HCT116 (cell line): ENCODE measurements at regions of chr4 and their contacts with region 1.

Region 1: GRCh38 chr4:173025131-173025530 is 143.5 kb upstream of the GALNT7 start:
- DNase-seq: peak; percentile 76
- ATAC-seq: peak; percentile 90
- H3K4me3 ChIP-seq: no peak overlapping the region
- H3K27ac ChIP-seq: no peak overlapping the region
- H3K4me1 ChIP-seq: no peaks in the 10 kb centered on the region
- H3K27me3 ChIP-seq: no peaks in the 10 kb centered on the region
- CTCF ChIP-seq: peak; percentile 70 to 89 (median 83)
- POLR2A ChIP-seq: no peak
- RAD21 ChIP-seq: peak; percentile 95

Region 2: GRCh38 chr4:172736046-172736445 is 289.1 kb before region 1 on chr4:
- CTCF ChIA-PET with region 1: no interaction called
- POLR2A ChIA-PET with region 1: no interaction called
- RAD21 ChIA-PET with region 1: no interaction called
- intact Hi-C with region 1: no loop called
- DNase-seq: no peak
- ATAC-seq: no peak
- H3K4me3 ChIP-seq: no peak overlapping the region
- H3K27ac ChIP-seq: no peak overlapping the region
- H3K4me1 ChIP-seq: no peaks in the 10 kb centered on the region
- H3K27me3 ChIP-seq: no peaks in the 10 kb centered on the region
- CTCF ChIP-seq: no peak
- POLR2A ChIP-seq: no peak
- RAD21 ChIP-seq: no peak

Region 3: GRCh38 chr4:173013232-173013930 is 11.8 kb before region 1 on chr4:
- CTCF ChIA-PET with region 1: interaction called, 33 read pairs
- POLR2A ChIA-PET with region 1: no interaction called
- RAD21 ChIA-PET with region 1: interaction called in 1 of 2 experiments, 3 read pairs
- intact Hi-C with region 1: no loop called
- DNase-seq: no peak
- ATAC-seq: peak; percentile 61
- H3K4me3 ChIP-seq: no peak overlapping the region
- H3K27ac ChIP-seq: no peak overlapping the region
- H3K4me1 ChIP-seq: peaks cover 0 to 9% of the 10 kb centered on the region in 2 experiments; a peak in 2 of 4 replicates
- H3K27me3 ChIP-seq: no peaks in the 10 kb centered on the region
- CTCF ChIP-seq: peak; percentile 50 to 71 (median 69)
- POLR2A ChIP-seq: no peak
- RAD21 ChIP-seq: peak; percentile 81

Region 4: GRCh38 chr4:173168396-173169177 is 143.5 kb after region 1 on chr4 and contains the start of gene GALNT7:
- CTCF ChIA-PET with region 1: interaction called, 3 read pairs
- POLR2A ChIA-PET with region 1: no interaction called
- RAD21 ChIA-PET with region 1: interaction called in 1 of 2 experiments, 3 read pairs
- intact Hi-C with region 1: loop called (anchors 1 kb)
- DNase-seq: no peak
- ATAC-seq: peak; percentile 74
- H3K4me3 ChIP-seq: peak within 1 kb of the TSS; percentile 68 to 80
- H3K27ac ChIP-seq: peak within 1 kb of the TSS; percentile 98
- H3K4me1 ChIP-seq: peaks cover 17 to 36% of the 10 kb centered on the region in 2 experiments; a peak in 3 of 4 replicates
- H3K27me3 ChIP-seq: no peaks in the 10 kb centered on the region
- CTCF ChIP-seq: no peak
- POLR2A ChIP-seq: peak; percentile 55
- RAD21 ChIP-seq: no peak
- total RNA-seq, gene GALNT7: 21.3 TPM

Region 5: GRCh38 chr4:173257732-173258717 is 232.9 kb after region 1 on chr4:
- CTCF ChIA-PET with region 1: interaction called, 58 read pairs
- POLR2A ChIA-PET with region 1: interaction called, 3 read pairs
- RAD21 ChIA-PET with region 1: interaction called, 5 to 9 read pairs
- intact Hi-C with region 1: loop called (anchors 1 kb)
- DNase-seq: peak; percentile 63
- ATAC-seq: peak; percentile 92
- H3K4me3 ChIP-seq: no peak overlapping the region
- H3K27ac ChIP-seq: no peak overlapping the region
- H3K4me1 ChIP-seq: peaks cover 6 to 9% of the 10 kb centered on the region in 2 experiments
- H3K27me3 ChIP-seq: no peaks in the 10 kb centered on the region
- CTCF ChIP-seq: peak; percentile 80 to 97 (median 87)
- POLR2A ChIP-seq: no peak
- RAD21 ChIP-seq: peak; percentile 94

Region 6: GRCh38 chr4:173301518-173302201 is 276.5 kb after region 1 on chr4:
- CTCF ChIA-PET with region 1: interaction called, 27 read pairs
- POLR2A ChIA-PET with region 1: no interaction called
- RAD21 ChIA-PET with region 1: interaction called, 3 to 4 read pairs
- intact Hi-C with region 1: no loop called
- DNase-seq: peak; percentile 3
- ATAC-seq: no peak
- H3K4me3 ChIP-seq: no peak overlapping the region
- H3K27ac ChIP-seq: no peak overlapping the region
- H3K4me1 ChIP-seq: no peaks in the 10 kb centered on the region
- H3K27me3 ChIP-seq: no peaks in the 10 kb centered on the region
- CTCF ChIP-seq: peak; percentile 56 to 89 (median 66); a peak in 5 of 6 replicates
- POLR2A ChIP-seq: no peak
- RAD21 ChIP-seq: peak; percentile 68

Region 7: DNA sequence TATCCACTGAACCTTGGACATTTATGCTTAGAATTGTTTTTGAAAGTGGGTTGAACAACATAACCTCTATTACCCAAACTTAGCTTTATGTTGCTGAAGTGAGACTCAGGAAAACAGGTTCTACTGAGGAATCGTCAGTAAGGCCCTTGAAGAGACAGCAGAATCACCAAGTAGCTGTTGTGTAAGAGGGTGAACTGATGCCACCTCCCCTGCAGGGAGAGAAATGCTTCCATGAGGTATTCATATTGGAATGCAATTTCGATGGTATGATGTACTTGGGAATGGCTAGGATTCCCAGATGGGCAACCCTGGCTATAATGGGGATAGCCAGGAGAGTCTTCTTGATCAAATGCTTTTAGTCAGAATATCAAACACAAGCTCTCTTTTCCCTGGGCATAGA is 377.9 kb after region 1 on chr4:
- CTCF ChIA-PET with region 1: no interaction called
- POLR2A ChIA-PET with region 1: no interaction called
- RAD21 ChIA-PET with region 1: no interaction called
- intact Hi-C with region 1: loop called (anchors 5 kb)
- DNase-seq: no peak
- ATAC-seq: no peak
- H3K4me3 ChIP-seq: no peak overlapping the region
- H3K27ac ChIP-seq: no peak overlapping the region
- H3K4me1 ChIP-seq: no peaks in the 10 kb centered on the region
- H3K27me3 ChIP-seq: no peaks in the 10 kb centered on the region
- CTCF ChIP-seq: no peak
- POLR2A ChIP-seq: no peak
- RAD21 ChIP-seq: no peak

Region 8: DNA sequence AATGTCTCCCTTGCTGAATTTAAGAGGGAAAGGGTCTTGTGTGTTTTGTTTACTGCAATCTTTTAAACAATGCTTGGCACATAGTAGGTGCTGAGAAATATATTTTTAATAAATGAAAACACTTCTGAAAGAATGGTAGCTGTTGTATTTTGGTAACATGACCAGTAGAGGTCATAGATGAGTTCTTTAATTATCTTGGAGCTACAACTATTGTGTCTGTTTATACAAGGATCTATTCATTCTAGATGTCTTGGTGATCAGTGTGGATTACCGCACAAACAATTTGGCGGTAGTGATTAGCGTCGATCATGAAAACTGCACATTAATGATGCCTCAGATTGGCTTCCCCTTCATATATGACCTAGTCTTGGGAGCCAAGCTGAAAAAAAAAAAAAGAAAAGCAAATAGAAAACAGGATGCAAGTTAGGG is 395.2 kb after region 1 on chr4:
- CTCF ChIA-PET with region 1: interaction called, 3 read pairs
- POLR2A ChIA-PET with region 1: no interaction called
- RAD21 ChIA-PET with region 1: no interaction called
- intact Hi-C with region 1: loop called (anchors 5 kb)
- DNase-seq: peak; percentile 12
- ATAC-seq: peak; percentile 67
- H3K4me3 ChIP-seq: no peak overlapping the region
- H3K27ac ChIP-seq: no peak overlapping the region
- H3K4me1 ChIP-seq: peaks cover 0 to 5% of the 10 kb centered on the region in 2 experiments; a peak in 1 of 4 replicates
- H3K27me3 ChIP-seq: no peaks in the 10 kb centered on the region
- CTCF ChIP-seq: peak; percentile 31 to 62 (median 56); a peak in 3 of 6 replicates
- POLR2A ChIP-seq: no peak
- RAD21 ChIP-seq: peak; percentile 63